Common myeloid progenitor, CD34-positive (primary cell): ENCODE measurements at regions of chr16 and their contacts with region 1.

Region 1: GRCh38 chr16:89297156-89297883 is 79.8 kb downstream of the ZNF778 start:
- DNase-seq: peak in 2 of 3 donors; percentile 34 to 47
- H3K4me3 ChIP-seq: no peak overlapping the region
- H3K27ac ChIP-seq: no peak overlapping the region
- H3K4me1 ChIP-seq: peaks cover 0 to 39% (median 36%) of the 10 kb centered on the region in 4 experiments
- H3K27me3 ChIP-seq: no peaks in the 10 kb centered on the region

Region 2: DNA sequence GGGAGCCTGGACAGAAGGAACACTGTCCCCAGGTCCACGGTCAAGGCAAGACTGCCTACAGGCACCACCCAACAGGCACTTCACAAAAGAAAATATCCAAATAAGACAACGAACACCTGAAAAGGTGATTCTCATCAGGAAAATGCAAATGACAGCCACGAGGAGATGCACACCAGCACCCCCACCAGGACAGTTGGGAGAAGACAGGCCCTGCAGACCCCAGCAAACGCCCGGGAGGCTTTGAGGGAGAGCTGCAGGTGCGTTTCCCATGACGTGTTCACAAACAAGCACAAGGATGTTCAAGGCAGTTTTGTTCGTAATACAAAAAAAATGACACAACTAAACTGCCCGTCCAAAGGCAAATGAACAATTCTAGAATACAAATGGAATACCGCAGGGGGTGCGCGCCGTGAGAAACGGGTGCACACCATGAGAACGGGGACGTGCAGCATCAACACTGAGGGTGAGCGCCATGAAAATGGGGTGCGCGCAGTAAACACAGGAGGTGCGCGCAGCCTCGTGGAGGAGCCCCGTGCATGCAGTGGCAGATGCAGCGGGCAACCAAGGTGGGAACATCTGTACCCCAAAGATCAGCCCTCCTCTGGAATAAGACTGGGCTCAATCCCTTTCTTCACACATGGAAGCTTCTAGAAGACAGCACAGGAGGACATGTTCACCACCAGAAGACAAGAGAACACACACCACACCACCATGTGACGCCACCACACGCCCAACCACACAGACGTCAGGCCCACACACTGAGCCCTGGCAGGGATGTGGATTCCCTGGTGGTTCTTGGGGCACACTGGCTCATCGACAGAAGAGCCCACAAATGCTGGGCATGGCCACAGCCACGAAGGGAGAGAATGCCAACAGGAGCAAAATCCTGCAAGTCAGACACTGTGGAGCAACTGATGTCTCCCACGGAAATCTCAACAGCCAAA is 11.3 kb after region 1 on chr16:
- CTCF ChIA-PET with region 1: interaction called, 20 read pairs
- POLR2A ChIA-PET with region 1: no interaction called
- DNase-seq: peak in 2 of 3 donors; percentile 32 to 38
- H3K4me3 ChIP-seq: no peak overlapping the region
- H3K27ac ChIP-seq: no peak overlapping the region
- H3K4me1 ChIP-seq: peaks cover 0 to 20% (median 14%) of the 10 kb centered on the region in 4 experiments
- H3K27me3 ChIP-seq: no peaks in the 10 kb centered on the region

Region 3: DNA sequence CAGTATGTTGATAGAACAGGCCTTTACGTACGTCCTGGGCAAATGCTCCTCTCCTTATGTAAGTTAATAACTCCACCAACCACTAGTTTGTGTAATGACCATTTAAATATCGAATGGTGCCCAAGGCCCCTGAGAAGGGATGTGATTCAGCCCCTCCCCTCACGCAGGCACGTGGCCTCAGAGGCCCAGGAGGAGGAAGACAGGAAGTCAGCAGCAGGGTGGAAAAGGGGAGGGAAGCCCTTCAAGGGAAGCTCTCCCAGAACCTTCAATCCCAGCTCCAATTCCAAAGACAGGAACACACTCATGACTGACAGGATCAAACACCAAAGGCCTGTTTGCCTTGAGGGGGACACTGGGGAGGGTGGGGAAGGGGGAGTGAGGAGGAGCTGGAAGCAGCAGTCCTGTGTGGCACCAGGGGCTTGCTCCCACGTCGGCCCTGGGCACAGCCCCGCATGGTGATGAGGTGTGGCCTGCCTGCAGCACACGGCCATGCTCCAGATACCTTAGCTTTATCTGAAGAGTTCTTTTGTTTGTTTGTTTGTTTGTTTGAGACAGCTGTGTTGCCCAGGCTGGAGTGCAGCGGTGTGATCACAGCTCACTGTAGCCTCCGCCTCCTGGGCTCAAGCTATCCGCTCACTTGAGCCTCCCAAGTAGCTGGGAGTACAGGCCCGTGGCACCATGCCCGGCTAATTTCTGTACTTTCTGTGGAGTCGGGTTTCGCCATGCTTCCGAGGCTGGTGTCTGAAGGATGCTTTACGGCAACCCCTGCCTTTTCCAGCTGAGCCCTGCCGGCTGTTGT is 25.2 kb after region 1 on chr16:
- CTCF ChIA-PET with region 1: no interaction called
- POLR2A ChIA-PET with region 1: no interaction called
- DNase-seq: no peak
- H3K4me3 ChIP-seq: no peak overlapping the region
- H3K27ac ChIP-seq: no peak overlapping the region
- H3K4me1 ChIP-seq: peaks cover 0 to 92% (median 67%) of the 10 kb centered on the region in 4 experiments
- H3K27me3 ChIP-seq: no peaks in the 10 kb centered on the region

Region 4: DNA sequence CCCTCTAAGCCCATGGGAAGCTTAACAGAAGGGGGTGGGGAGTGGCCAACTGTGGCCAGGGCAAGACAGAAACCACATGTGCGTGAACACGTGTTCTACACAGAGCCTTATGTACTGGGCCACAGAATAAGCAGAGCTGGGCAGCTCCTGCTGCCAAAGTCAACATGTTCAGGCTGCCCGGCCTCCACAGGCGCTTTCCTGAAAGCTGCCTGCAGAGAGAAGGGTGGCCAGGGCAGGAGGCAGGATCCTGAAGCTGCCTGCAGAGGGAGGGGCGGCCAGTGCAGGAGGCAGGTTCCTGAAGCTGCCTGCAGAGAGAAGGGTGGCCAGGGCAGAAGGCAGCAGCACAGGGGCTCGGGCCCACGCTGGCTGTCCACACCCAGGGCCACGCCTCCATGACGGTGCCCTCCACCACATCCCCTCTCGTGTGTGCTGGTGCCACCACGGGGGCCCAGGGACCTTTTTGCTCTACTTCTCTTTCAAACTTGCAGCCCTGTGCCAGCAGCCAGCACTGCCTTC is 113.5 kb after region 1 on chr16:
- CTCF ChIA-PET with region 1: no interaction called
- POLR2A ChIA-PET with region 1: no interaction called
- DNase-seq: peak in 2 of 3 donors; percentile 75 to 83
- H3K4me3 ChIP-seq: peak overlapping the region in 1 of 7 experiments; percentile 45
- H3K27ac ChIP-seq: peak overlapping the region in 1 of 2 experiments; percentile 44
- H3K4me1 ChIP-seq: peaks cover 11 to 86% (median 75%) of the 10 kb centered on the region in 4 experiments
- H3K27me3 ChIP-seq: no peaks in the 10 kb centered on the region